ENCODE measurements at regions of chr9 and their contacts with region 1.

Region 1: DNA sequence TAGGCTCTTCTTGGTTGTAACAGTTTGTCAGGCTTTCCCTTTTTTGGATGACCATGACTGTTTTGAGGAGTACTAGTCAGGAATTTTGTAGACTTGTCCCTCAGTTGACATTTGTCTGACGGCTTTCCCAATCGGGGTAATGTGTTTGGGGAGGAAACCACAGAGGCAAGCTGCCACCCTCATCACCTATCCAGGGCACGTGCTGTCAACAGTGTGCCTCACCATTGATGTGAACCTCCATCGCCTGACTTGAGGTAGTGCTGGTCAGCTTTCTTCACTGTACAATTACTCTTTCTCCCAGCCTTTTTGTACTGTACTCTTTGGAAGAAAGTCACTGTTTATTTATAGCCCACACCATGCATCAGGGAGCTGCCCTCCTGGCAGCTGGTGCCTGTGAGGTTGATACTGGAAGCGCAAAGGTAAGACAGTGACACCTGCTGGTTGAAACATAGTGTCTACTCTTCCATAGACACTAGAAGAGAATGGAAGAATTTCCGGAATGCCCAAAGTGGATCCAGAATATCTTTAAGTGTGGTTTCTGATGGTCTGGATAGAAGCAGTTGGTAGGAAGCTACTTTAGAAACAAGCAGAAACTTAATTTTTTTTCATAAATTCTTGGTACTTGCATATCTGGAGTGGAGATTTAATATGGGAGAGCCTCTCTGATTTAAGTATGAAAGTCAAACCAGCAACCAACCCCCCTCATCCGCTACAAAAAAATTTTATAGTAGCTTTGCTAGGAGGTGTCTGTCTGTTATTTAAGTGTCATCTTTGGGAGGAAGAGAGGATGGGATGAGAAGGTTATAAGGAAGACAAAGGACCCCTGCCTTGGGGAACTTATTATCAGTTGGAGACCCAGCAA is 69.3 kb downstream of the SNX30 start:
- DNase-seq: peak; percentile 50
- H3K4me3 ChIP-seq: no peak overlapping the region
- H3K27ac ChIP-seq: no peak overlapping the region
- H3K4me1 ChIP-seq: no peaks in the 10 kb centered on the region
- H3K27me3 ChIP-seq: no peaks in the 10 kb centered on the region
- CTCF ChIP-seq: peak; percentile 55 to 60
- POLR2A ChIP-seq: no peak

Region 2: GRCh38 chr9:112379177-112380101 is 440.4 kb before region 1 on chr9:
- CTCF ChIA-PET with region 1: interaction called, 11 read pairs
- POLR2A ChIA-PET with region 1: no interaction called
- dilution Hi-C with region 1: no loop called
- intact Hi-C with region 1: no loop called
- DNase-seq: peak; percentile 99
- H3K4me3 ChIP-seq: peak overlapping the region; percentile 79 to 98 (median 87)
- H3K27ac ChIP-seq: peak overlapping the region; percentile 94
- H3K4me1 ChIP-seq: peaks cover 16% of the 10 kb centered on the region
- H3K27me3 ChIP-seq: no peaks in the 10 kb centered on the region
- CTCF ChIP-seq: peak in 1 of 2 donors; percentile 5
- POLR2A ChIP-seq: peak; percentile 96

Region 3: GRCh38 chr9:112743216-112743836 is 76.5 kb before region 1 on chr9:
- CTCF ChIA-PET with region 1: no interaction called
- POLR2A ChIA-PET with region 1: no interaction called
- dilution Hi-C with region 1: no loop called
- intact Hi-C with region 1: loop called (anchors 1 kb)
- DNase-seq: no peak
- H3K4me3 ChIP-seq: no peak overlapping the region
- H3K27ac ChIP-seq: no peak overlapping the region
- H3K4me1 ChIP-seq: no peaks in the 10 kb centered on the region
- H3K27me3 ChIP-seq: no peaks in the 10 kb centered on the region
- CTCF ChIP-seq: no peak
- POLR2A ChIP-seq: no peak

Region 4: GRCh38 chr9:113523421-113524236 is 703.8 kb after region 1 on chr9:
- CTCF ChIA-PET with region 1: no interaction called
- POLR2A ChIA-PET with region 1: no interaction called
- dilution Hi-C with region 1: no loop called
- intact Hi-C with region 1: no loop called
- DNase-seq: peak; percentile 85
- H3K4me3 ChIP-seq: no peak overlapping the region
- H3K27ac ChIP-seq: peak overlapping the region; percentile 80
- H3K4me1 ChIP-seq: peaks cover 65% of the 10 kb centered on the region
- H3K27me3 ChIP-seq: no peaks in the 10 kb centered on the region
- CTCF ChIP-seq: no peak
- POLR2A ChIP-seq: peak; percentile 21